ENCODE measurements at regions of chr3 and their contacts with region 1.

Region 1: DNA sequence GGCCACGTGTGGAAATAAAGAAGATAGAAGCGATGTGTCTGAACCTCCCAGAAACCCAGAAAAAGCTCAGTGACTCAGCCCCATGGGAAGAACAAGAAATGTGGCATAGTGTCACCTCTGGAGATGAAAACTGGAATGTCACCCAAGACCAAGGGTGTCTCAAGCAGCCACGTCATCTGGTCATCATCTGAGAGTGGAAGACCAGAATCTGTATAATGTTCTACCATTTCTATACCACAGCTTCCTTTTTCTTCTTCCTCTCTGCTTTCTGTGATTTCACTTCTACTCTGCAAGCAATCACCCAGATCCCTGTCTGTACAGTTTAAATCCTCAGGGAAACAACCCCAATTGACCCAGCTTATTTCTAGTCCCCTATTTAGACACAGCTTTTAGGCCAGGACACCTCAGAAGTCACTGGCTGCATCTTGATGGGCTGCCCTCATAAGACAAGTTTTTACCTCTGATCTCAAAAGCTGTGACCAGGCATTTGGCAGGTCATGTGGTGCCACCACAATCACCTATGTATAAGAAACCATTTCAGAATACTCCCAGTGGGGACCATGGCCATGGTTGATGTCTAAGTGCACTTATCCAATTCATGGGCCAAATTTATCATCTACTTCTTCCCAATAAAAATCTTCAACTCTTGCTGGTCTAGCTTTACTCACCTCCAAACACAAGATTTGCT is 278.5 kb upstream of the UMPS start:
- DNase-seq: no peak
- ATAC-seq: no peak
- H3K4me3 ChIP-seq: no peak overlapping the region
- H3K27ac ChIP-seq: no peak overlapping the region
- H3K4me1 ChIP-seq: no peaks in the 10 kb centered on the region
- H3K27me3 ChIP-seq: no peaks in the 10 kb centered on the region
- CTCF ChIP-seq: no peak
- POLR2A ChIP-seq: no peak

Region 2: GRCh38 chr3:124097362-124098131 is 354.2 kb before region 1 on chr3:
- intact Hi-C with region 1: loop called in 1 of 2 experiments (anchors 10 kb)
- DNase-seq: no peak
- ATAC-seq: no peak
- H3K4me3 ChIP-seq: no peak overlapping the region
- H3K27ac ChIP-seq: no peak overlapping the region
- H3K4me1 ChIP-seq: no peaks in the 10 kb centered on the region
- H3K27me3 ChIP-seq: no peaks in the 10 kb centered on the region
- CTCF ChIP-seq: no peak
- POLR2A ChIP-seq: no peak